Endothelial cell of umbilical vein (primary cell): ENCODE measurements at regions of chr1 and their contacts with region 1.

Region 1: DNA sequence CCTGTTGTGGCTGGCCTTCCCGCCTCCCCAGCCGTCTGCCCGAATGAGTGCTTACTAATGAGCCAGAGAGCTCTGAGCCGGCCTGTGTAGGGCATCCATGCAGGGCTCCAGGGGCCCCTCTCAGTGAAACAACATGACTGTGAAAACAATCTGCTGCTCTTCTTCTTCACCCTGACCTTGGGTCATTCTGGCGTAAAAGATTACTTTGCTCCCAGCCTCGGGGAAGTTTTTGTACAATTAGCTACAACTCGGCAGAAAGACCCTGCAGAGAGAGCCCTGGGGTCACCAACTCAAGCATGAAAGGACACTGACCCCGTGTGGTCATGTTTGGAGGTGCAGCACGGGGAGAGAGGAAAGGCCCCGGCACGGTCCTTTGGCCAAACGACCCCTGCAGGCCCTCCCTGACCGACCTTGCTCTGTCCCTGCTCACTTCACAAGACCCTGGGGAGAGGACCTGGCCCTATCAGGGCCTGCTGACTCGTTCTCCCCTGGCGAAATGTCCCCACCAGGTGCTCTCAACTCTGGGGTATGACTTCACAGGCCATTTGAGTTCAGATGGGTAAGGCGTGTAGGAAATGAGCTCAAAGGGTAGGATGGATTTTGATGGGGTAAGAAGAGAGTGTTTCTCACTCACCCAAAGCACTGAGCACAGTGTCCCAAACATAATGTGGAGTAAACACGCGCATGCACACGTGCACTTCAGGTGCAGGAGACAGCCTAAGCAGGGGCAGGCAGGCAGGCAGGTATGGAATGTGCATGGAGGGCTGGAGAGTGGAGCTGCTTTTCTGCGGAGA is 22.9 kb upstream of the FAM20B start:
- DNase-seq: peak; percentile 63
- H3K4me3 ChIP-seq: no peak overlapping the region
- H3K27ac ChIP-seq: no peak overlapping the region
- H3K4me1 ChIP-seq: no peaks in the 10 kb centered on the region
- H3K27me3 ChIP-seq: no peaks in the 10 kb centered on the region
- CTCF ChIP-seq: peak; percentile 93 to 96
- POLR2A ChIP-seq: no peak

Region 2: GRCh38 chr1:178501705-178502329 is 500.9 kb before region 1 on chr1:
- CTCF ChIA-PET with region 1: interaction called, 17 read pairs
- POLR2A ChIA-PET with region 1: no interaction called
- dilution Hi-C with region 1: no loop called
- intact Hi-C with region 1: no loop called
- DNase-seq: peak; percentile 68
- H3K4me3 ChIP-seq: no peak overlapping the region
- H3K27ac ChIP-seq: no peak overlapping the region
- H3K4me1 ChIP-seq: no peaks in the 10 kb centered on the region
- H3K27me3 ChIP-seq: no peaks in the 10 kb centered on the region
- CTCF ChIP-seq: peak; percentile 92 to 96
- POLR2A ChIP-seq: no peak

Region 3: DNA sequence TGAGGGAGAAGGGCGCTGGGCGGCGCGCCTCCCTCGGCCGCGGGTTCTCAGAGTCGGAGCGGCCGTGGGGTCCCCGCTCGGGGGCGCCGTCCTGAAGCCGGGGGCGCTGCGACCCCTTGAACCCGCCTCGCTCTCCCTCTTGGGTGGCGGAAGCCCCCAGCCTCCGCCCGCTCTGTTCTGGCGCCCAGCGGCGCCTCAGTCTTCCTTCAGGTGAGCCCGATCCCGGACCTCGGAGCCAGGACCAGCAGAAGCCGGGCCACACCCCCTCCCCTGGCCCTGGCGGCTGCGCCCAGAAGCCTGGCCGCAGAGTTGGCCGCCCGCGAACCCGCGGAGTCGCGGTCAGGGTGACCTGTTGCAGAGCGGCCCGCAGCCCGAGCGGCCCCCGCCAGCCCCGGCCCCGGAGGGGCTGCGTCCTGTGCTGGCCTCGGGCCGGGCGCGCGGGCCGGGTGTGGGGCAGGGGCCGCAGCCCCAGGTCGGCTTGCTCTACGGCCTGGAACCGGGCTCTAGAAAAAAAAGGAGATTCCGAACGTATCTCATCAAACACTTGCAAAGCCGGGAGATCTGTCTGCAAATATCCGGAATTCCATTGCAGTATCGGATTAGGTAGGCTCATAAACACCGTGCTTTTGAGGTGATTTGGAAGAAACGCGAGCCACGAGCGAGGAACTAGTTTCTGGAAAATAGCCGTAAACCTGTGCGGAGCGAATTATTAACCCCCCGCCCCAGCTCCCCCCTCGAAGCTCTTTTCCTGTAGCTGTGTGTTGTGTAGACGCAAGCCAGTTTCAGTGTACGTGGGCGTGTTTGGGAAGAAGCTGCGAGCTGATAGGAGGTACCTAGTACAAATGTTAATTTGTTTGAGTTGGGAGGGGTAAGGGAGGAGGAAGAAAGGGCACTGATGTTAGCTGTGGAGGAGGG is 276.9 kb before region 1 on chr1:
- CTCF ChIA-PET with region 1: interaction called, 13 read pairs
- POLR2A ChIA-PET with region 1: no interaction called
- dilution Hi-C with region 1: no loop called
- intact Hi-C with region 1: no loop called
- DNase-seq: peak; percentile 86
- H3K4me3 ChIP-seq: peak overlapping the region; percentile 68 to 94 (median 92)
- H3K27ac ChIP-seq: peak overlapping the region; percentile 68
- H3K4me1 ChIP-seq: peaks cover 28% of the 10 kb centered on the region
- H3K27me3 ChIP-seq: no peaks in the 10 kb centered on the region
- CTCF ChIP-seq: peak in 1 of 2 donors; percentile 25
- POLR2A ChIP-seq: peak; percentile 49

Region 4: DNA sequence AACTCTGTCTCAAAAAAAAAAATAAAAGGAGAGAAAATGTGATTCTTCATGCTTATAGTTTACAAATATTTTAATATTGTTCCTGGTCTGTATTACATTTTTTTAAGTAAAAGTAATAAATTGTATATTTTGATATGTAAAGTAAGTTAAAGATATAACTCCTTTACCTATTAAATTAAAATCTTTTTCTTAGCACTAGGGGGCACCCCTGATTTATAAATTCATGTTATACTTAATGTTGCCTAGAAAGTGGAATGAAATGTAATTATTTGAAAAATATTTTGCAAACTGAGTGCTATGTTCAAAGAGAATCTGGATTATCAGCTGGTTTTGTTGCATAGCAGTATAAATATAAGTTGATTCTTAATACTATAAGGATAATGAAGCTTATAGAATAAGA is 228.5 kb before region 1 on chr1:
- CTCF ChIA-PET with region 1: interaction called, 182 read pairs
- POLR2A ChIA-PET with region 1: interaction called, 9 read pairs
- dilution Hi-C with region 1: loop called (anchors 25 kb)
- intact Hi-C with region 1: loop called (anchors 1 kb)
- DNase-seq: peak; percentile 29
- H3K4me3 ChIP-seq: no peak overlapping the region
- H3K27ac ChIP-seq: no peak overlapping the region
- H3K4me1 ChIP-seq: no peaks in the 10 kb centered on the region
- H3K27me3 ChIP-seq: no peaks in the 10 kb centered on the region
- CTCF ChIP-seq: peak in 1 of 2 donors; percentile 9
- POLR2A ChIP-seq: no peak

Region 5: DNA sequence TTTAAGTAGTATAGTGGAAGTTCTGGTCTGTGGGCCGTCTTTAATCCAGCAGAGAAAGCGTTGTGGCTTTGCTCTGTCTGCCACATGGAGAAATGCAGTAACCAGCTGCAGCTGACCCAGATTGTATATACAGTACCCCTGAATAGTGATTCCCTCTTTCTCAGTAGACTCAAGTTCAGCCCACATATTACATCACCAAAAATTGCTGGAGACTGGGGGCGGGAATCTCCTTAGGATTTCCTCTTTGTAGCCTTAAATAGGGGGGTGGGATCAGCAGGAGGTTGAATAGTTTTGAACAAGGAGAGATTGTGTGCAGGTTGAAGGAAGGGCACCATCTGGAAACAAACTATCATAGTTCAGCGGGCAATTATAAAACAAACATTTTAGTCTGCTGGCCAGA is 131.8 kb before region 1 on chr1 and contains the start of gene ANGPTL1:
- CTCF ChIA-PET with region 1: interaction called, 10 read pairs
- POLR2A ChIA-PET with region 1: no interaction called
- dilution Hi-C with region 1: no loop called
- intact Hi-C with region 1: no loop called
- DNase-seq: peak; percentile 71
- H3K4me3 ChIP-seq: no peak within 1 kb of the TSS
- H3K27ac ChIP-seq: no peak within 1 kb of the TSS
- H3K4me1 ChIP-seq: peaks cover 37% of the 10 kb centered on the region
- H3K27me3 ChIP-seq: no peaks in the 10 kb centered on the region
- CTCF ChIP-seq: no peak
- POLR2A ChIP-seq: no peak
- total RNA-seq, gene ANGPTL1: 0.51 TPM in 1 of 2 replicates, not detected in the other

Region 6: GRCh38 chr1:179029321-179029759 is 26.6 kb after region 1 on chr1:
- CTCF ChIA-PET with region 1: no interaction called
- POLR2A ChIA-PET with region 1: no interaction called
- dilution Hi-C with region 1: no loop called
- intact Hi-C with region 1: no loop called
- DNase-seq: no peak
- H3K4me3 ChIP-seq: no peak overlapping the region
- H3K27ac ChIP-seq: no peak overlapping the region
- H3K4me1 ChIP-seq: peaks cover 22% of the 10 kb centered on the region
- H3K27me3 ChIP-seq: peaks cover 0 to 3% of the 10 kb centered on the region in 2 experiments
- CTCF ChIP-seq: no peak
- POLR2A ChIP-seq: no peak

Region 7: DNA sequence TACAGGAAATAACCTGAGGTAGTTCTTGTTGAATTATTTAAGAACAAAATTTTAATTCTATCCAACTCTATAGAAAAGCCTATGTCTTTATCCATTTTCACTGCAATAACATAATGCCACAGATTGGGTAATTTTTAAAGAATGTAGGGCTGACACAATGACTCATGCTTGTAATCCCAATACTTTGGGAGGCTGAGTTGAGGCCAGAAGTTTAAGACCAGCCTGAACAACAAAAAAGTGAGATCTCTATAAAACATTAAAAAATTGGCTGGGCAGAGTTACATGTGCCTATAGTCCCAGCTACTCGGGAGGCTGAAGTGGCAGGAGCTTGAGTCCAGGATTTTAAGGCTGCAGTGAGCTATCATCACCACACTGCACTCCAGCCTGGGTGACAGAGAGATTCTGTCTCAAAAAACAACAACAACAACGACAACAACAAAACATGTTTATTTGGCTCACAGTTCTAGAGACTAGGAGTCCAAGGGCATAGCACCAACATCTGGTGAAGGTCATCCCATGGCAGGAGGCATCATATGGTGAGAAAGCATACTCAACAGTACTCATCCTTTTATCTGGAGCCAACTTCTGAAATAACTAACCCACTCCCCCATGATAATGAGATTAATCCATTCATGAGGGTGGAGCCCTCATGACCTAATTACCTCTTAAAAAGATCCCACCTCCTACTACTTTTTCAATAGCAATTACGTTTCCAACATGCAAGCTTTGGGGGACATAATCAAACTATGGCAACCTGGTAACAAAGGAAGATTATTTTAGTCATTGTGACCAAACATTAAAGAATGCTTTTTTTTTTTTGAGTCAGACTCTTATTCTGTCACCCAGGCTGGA is 167.1 kb after region 1 on chr1:
- CTCF ChIA-PET with region 1: no interaction called
- POLR2A ChIA-PET with region 1: no interaction called
- dilution Hi-C with region 1: no loop called
- intact Hi-C with region 1: no loop called
- DNase-seq: no peak
- H3K4me3 ChIP-seq: no peak overlapping the region
- H3K27ac ChIP-seq: no peak overlapping the region
- H3K4me1 ChIP-seq: peaks cover 4% of the 10 kb centered on the region
- H3K27me3 ChIP-seq: no peaks in the 10 kb centered on the region
- CTCF ChIP-seq: no peak
- POLR2A ChIP-seq: no peak